Activated B cell treated with CpG ODN at 0.5 μM for 24 hours (primary cell): ENCODE measurements at regions of chr7 and their contacts with region 1.

Region 1: GRCh38 chr7:50206453-50207250 is 97.9 kb upstream of the IKZF1 start:
- DNase-seq: no peak
- ATAC-seq: no peak
- H3K4me3 Mint-ChIP-seq: no peak overlapping the region
- H3K27ac Mint-ChIP-seq: peak overlapping the region; percentile 43
- H3K4me1 Mint-ChIP-seq: peaks cover 57% of the 10 kb centered on the region
- H3K27me3 Mint-ChIP-seq: no peaks in the 10 kb centered on the region
- CTCF ChIP-seq: no peak

Region 2: GRCh38 chr7:50092579-50093491 is 113.8 kb before region 1 on chr7 and contains the start of gene ZPBP:
- CTCF ChIA-PET with region 1: interaction called, 4 read pairs
- POLR2A ChIA-PET with region 1: no interaction called
- intact Hi-C with region 1: loop called (anchors 1 kb)
- DNase-seq: peak; percentile 40
- ATAC-seq: peak; percentile 79
- H3K4me3 Mint-ChIP-seq: peak within 1 kb of the TSS; percentile 88
- H3K27ac Mint-ChIP-seq: peak within 1 kb of the TSS; percentile 81
- H3K4me1 Mint-ChIP-seq: peaks cover 8% of the 10 kb centered on the region
- H3K27me3 Mint-ChIP-seq: peaks cover 2% of the 10 kb centered on the region
- CTCF ChIP-seq: peak; percentile 61
- total RNA-seq, gene ZPBP: not detected in 2 replicates

Region 3: GRCh38 chr7:50185208-50185607 is 21.4 kb before region 1 on chr7:
- CTCF ChIA-PET with region 1: interaction called, 12 read pairs
- POLR2A ChIA-PET with region 1: no interaction called
- intact Hi-C with region 1: no loop called
- DNase-seq: no peak
- ATAC-seq: no peak
- H3K4me3 Mint-ChIP-seq: no peak overlapping the region
- H3K27ac Mint-ChIP-seq: no peak overlapping the region
- H3K4me1 Mint-ChIP-seq: peaks cover 16% of the 10 kb centered on the region
- H3K27me3 Mint-ChIP-seq: no peaks in the 10 kb centered on the region
- CTCF ChIP-seq: no peak

Region 4: DNA sequence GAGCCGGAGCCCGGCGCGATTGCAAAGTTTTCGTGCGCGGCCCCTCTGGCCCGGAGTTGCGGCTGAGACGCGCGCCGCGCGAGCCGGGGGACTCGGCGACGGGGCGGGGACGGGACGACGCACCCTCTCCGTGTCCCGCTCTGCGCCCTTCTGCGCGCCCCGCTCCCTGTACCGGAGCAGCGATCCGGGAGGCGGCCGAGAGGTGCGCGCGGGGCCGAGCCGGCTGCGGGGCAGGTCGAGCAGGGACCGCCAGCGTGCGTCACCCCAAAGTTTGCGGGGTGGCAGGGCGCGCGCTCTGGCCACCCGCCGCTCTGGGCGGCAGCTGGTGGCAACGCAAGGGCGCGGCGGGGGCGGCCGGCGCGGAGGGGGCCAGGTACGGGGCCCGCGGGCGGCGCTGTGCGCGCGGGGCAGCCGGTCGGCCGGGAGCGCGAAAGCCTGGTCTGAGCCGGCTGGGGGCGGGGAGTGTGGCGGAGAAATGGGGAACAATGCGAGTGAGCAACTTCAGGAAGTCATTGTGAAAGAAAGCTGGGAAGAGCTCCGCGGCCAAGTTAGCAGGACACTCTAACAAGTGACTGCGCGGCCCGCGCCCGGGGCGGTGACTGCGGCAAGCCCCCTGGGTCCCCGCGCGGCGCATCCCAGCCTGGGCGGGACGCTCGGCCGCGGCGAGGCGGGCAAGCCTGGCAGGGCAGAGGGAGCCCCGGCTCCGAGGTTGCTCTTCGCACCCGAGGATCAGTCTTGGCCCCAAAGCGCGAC is 97.7 kb after region 1 on chr7 and contains the start of gene IKZF1:
- CTCF ChIA-PET with region 1: interaction called, 30 read pairs
- POLR2A ChIA-PET with region 1: interaction called, 15 read pairs
- intact Hi-C with region 1: loop called (anchors 1 kb)
- DNase-seq: peak; percentile 72
- ATAC-seq: peak; percentile 44
- H3K4me3 Mint-ChIP-seq: peak within 1 kb of the TSS; percentile 100
- H3K27ac Mint-ChIP-seq: peak within 1 kb of the TSS; percentile 96
- H3K4me1 Mint-ChIP-seq: peaks cover 53% of the 10 kb centered on the region
- H3K27me3 Mint-ChIP-seq: no peaks in the 10 kb centered on the region
- CTCF ChIP-seq: no peak
- total RNA-seq, gene IKZF1: 301 and 325 TPM in 2 replicates

Region 5: DNA sequence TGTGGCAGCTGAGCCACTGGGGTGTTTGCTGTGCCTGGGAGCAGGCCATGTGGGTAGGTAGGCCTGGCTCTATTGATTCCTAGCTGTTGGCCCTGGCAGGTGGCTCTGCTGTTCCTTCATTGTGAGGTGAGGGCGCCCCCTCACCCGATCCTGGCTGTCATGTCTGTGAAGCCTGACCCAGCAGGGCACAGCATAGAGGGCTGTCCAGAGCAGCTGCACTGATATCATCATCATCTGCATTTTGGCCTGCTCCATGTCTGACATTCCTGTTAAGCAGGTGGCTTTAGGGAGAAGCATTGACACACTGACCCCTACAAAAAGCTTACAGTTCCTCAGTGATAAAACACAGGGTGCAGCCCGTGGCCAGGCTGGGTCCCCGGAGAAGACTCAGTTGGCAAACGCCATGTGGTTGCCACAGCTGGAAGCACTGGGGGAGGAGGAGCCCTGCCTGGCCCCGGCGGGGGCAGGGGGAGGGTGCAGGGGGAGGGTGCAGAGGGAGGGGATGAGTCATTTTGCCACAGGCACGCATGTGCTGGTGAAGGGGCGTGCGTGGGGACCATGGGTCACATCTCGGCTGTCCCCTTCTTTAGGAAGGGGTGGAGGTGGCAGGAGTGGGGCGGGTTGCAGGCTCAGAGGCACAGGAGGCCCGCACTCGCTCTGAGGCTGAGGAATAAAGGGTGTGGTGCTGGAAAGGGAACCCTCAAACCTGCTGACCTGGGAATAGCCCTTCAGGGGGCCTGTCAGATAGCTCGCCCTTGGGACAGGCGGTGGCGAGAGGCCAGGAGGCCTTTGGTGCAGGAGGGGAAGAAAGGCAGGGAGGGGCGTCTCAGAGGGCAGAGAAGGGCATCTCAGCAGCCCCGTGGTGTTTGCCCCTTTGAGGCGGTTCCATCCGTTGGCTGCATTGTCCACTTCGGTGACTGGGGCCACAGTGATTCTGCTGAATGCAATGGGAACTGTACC is 129.4 kb after region 1 on chr7:
- CTCF ChIA-PET with region 1: interaction called, 12 read pairs
- POLR2A ChIA-PET with region 1: interaction called, 6 read pairs
- intact Hi-C with region 1: no loop called
- DNase-seq: peak; percentile 69
- ATAC-seq: peak; percentile 63
- H3K4me3 Mint-ChIP-seq: peak overlapping the region; percentile 74
- H3K27ac Mint-ChIP-seq: no peak overlapping the region
- H3K4me1 Mint-ChIP-seq: peaks cover 2% of the 10 kb centered on the region
- H3K27me3 Mint-ChIP-seq: no peaks in the 10 kb centered on the region
- CTCF ChIP-seq: no peak

Region 6: GRCh38 chr7:50418086-50418515 is 211.4 kb after region 1 on chr7:
- CTCF ChIA-PET with region 1: interaction called, 85 read pairs
- POLR2A ChIA-PET with region 1: interaction called, 23 read pairs
- intact Hi-C with region 1: loop called (anchors 1 kb)
- DNase-seq: peak; percentile 47
- ATAC-seq: peak; percentile 82
- H3K4me3 Mint-ChIP-seq: no peak overlapping the region
- H3K27ac Mint-ChIP-seq: peak overlapping the region; percentile 35
- H3K4me1 Mint-ChIP-seq: peaks cover 51% of the 10 kb centered on the region
- H3K27me3 Mint-ChIP-seq: no peaks in the 10 kb centered on the region
- CTCF ChIP-seq: peak; percentile 56

Region 7: GRCh38 chr7:50679218-50680007 is 472.8 kb after region 1 on chr7:
- CTCF ChIA-PET with region 1: interaction called, 6 read pairs
- POLR2A ChIA-PET with region 1: no interaction called
- intact Hi-C with region 1: loop called (anchors 1 kb)
- DNase-seq: no peak
- ATAC-seq: peak; percentile 42
- H3K4me3 Mint-ChIP-seq: no peak overlapping the region
- H3K27ac Mint-ChIP-seq: no peak overlapping the region
- H3K4me1 Mint-ChIP-seq: peaks cover 6% of the 10 kb centered on the region
- H3K27me3 Mint-ChIP-seq: peaks cover 5% of the 10 kb centered on the region
- CTCF ChIP-seq: no peak